ENCODE measurements at regions of chr12 and their contacts with region 1.

Region 1: DNA sequence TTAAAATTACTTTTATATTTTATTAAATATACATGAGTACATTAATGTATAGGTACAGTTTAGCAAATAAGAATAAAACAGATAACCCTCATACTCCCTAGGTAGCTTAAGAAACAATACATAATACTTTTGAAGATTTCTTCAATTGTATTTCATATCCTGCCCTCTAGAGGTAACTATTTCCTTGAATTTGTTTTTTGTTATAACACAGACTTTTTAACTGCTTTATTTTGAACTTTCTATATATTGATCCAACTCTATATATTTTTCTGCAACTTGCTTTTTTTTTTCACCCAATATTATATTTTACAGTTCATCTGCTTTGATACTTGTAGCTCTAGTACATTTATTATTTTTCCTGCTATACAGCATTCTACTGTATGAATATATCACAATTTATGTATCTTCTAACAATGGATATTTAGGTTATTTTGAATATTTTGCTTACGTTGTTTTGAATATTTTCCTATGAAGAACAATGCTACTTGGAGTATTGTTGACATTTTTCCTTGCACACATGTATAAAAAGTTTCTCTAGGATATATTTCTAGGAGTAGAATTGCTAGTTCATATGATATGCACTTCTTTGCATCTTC is 72.8 kb upstream of the ABCD2 start:
- DNase-seq: peak; percentile 29
- H3K4me3 ChIP-seq: no peak overlapping the region
- H3K27ac ChIP-seq: no peak overlapping the region
- H3K4me1 ChIP-seq: no peaks in the 10 kb centered on the region
- CTCF ChIP-seq: peak; percentile 74

Region 2: DNA sequence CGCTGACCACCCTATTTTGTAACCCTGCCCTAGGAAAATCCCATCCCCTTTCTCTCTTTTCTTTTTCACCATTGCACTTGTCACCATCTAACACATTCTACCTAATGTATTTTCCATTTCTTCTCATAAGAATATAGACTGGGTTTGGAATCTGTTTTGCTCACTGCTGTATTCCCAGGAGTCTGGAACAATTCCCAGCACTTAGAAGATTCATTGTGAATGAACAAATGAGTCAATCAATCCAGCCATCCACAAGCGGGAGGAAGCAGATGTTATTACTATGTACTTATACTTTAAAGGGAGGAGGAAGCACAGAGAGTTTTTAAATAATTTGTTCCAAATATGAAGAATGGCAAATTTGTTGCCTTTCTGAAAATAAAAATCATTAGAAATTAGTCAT is 391.6 kb before region 1 on chr12:
- CTCF ChIA-PET with region 1: no interaction called
- POLR2A ChIA-PET with region 1: no interaction called
- intact Hi-C with region 1: no loop called
- DNase-seq: no peak
- H3K4me3 ChIP-seq: no peak overlapping the region
- H3K27ac ChIP-seq: no peak overlapping the region
- H3K4me1 ChIP-seq: no peaks in the 10 kb centered on the region
- CTCF ChIP-seq: no peak

Region 3: GRCh38 chr12:39319187-39319586 is 373.2 kb before region 1 on chr12:
- CTCF ChIA-PET with region 1: no interaction called
- POLR2A ChIA-PET with region 1: no interaction called
- intact Hi-C with region 1: loop called (anchors 2 kb)
- DNase-seq: no peak
- H3K4me3 ChIP-seq: no peak overlapping the region
- H3K27ac ChIP-seq: no peak overlapping the region
- H3K4me1 ChIP-seq: no peaks in the 10 kb centered on the region
- CTCF ChIP-seq: no peak

Region 4: GRCh38 chr12:39587225-39587624 is 105.1 kb before region 1 on chr12:
- CTCF ChIA-PET with region 1: no interaction called
- POLR2A ChIA-PET with region 1: no interaction called
- intact Hi-C with region 1: loop called (anchors 5 kb)
- DNase-seq: peak; percentile 35
- H3K4me3 ChIP-seq: no peak overlapping the region
- H3K27ac ChIP-seq: no peak overlapping the region
- H3K4me1 ChIP-seq: no peaks in the 10 kb centered on the region
- CTCF ChIP-seq: peak; percentile 77